Transverse colon (tissue), 4 donors: ENCODE measurements at regions of chr18 and their contacts with region 1.

Region 1: DNA sequence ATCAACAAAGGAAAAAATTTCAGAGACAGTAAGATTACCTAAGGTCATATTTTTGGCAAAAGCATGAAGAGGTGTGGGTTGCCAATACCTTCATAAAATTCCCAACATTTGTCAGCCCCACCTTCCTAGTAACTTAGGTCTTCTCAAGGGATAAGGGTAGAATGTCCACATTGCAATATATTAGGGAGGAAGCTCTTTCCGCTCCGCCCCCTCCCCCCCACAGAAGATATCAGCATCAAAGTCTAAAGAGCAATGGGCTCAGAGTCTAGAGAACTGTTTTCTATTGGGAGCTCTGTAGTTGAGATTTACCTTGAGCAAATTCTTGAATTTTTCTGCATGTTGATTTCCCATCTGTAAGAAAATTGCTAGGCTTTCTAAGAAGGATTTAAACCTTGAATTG is 200.3 kb downstream of the CD226 start:
- DNase-seq: no peak
- H3K4me3 ChIP-seq: no peak overlapping the region
- H3K27ac ChIP-seq: no peak overlapping the region
- H3K4me1 ChIP-seq: no peaks in the 10 kb centered on the region
- H3K27me3 ChIP-seq: no peaks in the 10 kb centered on the region
- CTCF ChIP-seq: no peak
- EP300 ChIP-seq: no peak
- POLR2A ChIP-seq: no peak

Region 2: GRCh38 chr18:69727912-69728572 is 19.3 kb before region 1 on chr18:
- in situ Hi-C with region 1: no loop called
- intact Hi-C with region 1: no loop called
- DNase-seq: no peak
- H3K4me3 ChIP-seq: no peak overlapping the region
- H3K27ac ChIP-seq: no peak overlapping the region
- H3K4me1 ChIP-seq: no peaks in the 10 kb centered on the region
- H3K27me3 ChIP-seq: no peaks in the 10 kb centered on the region
- CTCF ChIP-seq: no peak
- EP300 ChIP-seq: no peak
- POLR2A ChIP-seq: no peak

Region 3: DNA sequence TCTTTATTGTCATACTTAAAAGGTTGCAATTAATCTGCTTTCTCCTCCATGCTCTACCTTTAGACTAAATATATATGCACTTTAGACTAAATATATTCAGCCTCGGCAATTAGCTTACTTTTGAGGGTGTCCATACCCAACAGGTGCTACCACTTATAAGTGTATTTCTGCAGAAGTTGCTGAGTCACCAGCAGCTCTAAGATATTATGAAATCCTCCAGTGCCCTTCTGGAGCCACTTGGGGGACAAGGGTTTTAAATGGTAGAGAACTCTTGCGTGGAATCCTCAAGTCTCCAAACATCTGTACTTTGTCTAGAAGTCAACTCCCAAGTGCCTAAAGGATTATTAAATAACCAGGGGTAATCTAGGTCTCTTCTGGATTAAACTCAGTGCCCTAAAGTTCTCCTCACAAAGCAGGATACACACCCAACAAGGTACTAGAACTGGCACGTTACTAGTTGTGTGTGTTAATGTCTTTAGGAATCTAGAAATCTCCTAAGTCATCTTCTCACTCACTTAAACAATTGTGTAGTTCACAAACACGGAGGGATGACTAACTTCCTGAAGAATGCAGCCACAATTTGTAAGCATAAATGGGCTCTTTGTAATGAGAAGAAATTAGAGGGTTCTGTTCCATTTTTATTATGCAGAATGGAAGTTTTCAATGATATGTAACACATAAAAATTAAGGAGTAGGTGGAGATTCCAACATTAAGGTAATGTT is 40.6 kb after region 1 on chr18:
- in situ Hi-C with region 1: no loop called
- intact Hi-C with region 1: loop called (anchors 2 kb)
- DNase-seq: no peak
- H3K4me3 ChIP-seq: no peak overlapping the region
- H3K27ac ChIP-seq: no peak overlapping the region
- H3K4me1 ChIP-seq: no peaks in the 10 kb centered on the region
- H3K27me3 ChIP-seq: no peaks in the 10 kb centered on the region
- CTCF ChIP-seq: no peak
- EP300 ChIP-seq: no peak
- POLR2A ChIP-seq: no peak

Region 4: DNA sequence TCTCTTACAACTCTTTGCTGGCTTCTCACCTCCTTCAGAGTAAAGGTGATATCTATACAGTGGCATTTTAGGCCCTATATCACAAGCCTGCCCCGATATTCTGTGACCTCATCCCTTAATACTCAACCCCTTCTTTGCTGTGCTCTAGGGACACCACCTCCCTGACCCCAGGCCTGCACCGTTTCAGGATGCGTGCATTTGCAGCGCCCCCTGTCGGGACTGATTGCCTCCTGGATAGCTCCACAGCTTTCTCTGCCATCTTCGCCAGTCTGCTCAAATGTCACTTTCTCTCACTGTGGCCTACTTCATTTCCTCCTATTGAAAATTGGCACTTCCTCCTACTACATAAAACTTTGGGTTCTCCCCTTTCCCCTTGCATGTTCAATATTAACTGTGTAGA is 831.1 kb after region 1 on chr18:
- in situ Hi-C with region 1: no loop called
- intact Hi-C with region 1: no loop called
- DNase-seq: no peak
- H3K4me3 ChIP-seq: no peak overlapping the region
- H3K27ac ChIP-seq: no peak overlapping the region
- H3K4me1 ChIP-seq: no peaks in the 10 kb centered on the region
- H3K27me3 ChIP-seq: no peaks in the 10 kb centered on the region
- CTCF ChIP-seq: no peak
- EP300 ChIP-seq: no peak
- POLR2A ChIP-seq: no peak